GM12878 (cell line): ENCODE measurements at regions of chr14 and their contacts with region 1.

Region 1: GRCh38 chr14:58797010-58797429 is 159.3 kb downstream of the DACT1 start:
- DNase-seq: peak; percentile 88
- ATAC-seq: peak; percentile 86
- H3K4me3 ChIP-seq: no peak overlapping the region
- H3K27ac ChIP-seq: no peak overlapping the region
- H3K4me1 ChIP-seq: peaks cover 7% of the 10 kb centered on the region; the same call in 1 of the 2 replicates
- H3K27me3 ChIP-seq: no peaks in the 10 kb centered on the region
- CTCF ChIP-seq: no peak
- EP300 ChIP-seq: peak; percentile 99 to 100
- POLR2A ChIP-seq: no peak
- RAD21 ChIP-seq: no peak

Region 2: DNA sequence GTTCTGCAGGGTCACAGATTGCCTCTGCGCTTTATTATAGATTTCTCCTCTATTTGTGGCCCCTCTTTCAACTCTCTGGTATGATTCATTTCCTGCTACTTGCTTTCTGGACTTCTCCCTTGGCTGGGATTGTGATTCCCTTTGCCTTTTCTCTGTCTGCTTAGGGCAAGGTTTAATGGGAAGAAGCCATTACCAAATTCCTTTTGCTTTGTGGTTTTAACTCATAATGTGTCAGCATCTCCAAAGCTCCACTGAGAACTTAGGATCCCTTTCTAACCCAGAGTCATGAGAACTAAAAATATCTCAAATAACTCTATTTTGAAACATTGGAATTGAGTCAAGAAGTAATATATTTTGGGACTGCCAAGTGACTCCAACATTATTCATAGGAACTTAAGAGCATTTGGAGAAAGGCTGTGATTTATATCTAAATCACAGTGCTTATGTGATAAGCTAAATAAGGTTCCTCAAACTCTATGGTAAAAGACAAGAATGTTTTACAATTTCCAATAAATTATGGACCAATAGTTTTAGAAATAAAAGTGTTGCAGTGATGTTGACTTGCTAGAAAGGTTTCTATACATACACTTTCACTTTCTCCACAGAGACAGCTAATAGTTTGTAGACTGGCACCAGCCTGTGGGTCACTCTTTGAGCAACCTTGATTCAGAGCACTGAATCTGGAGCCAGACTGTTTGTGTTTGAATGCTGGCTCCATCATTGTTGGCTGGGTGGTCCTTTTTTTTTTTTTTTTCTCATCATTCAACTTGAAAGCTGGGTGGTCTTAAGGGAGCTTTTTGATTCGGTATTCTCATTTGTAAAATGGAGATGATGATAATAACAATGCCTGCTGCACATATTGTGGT is 65.3 kb before region 1 on chr14:
- CTCF ChIA-PET with region 1: interaction called, 21 read pairs
- POLR2A ChIA-PET with region 1: interaction called, 5 read pairs
- RAD21 ChIA-PET with region 1: interaction called, 48 read pairs
- SMC1A ChIA-PET with region 1: interaction called, 35 read pairs
- in situ Hi-C with region 1: no loop called
- intact Hi-C with region 1: loop called (anchors 2 kb)
- DNase-seq: no peak
- ATAC-seq: no peak
- H3K4me3 ChIP-seq: no peak overlapping the region
- H3K27ac ChIP-seq: no peak overlapping the region
- H3K4me1 ChIP-seq: no peaks in the 10 kb centered on the region
- H3K27me3 ChIP-seq: no peaks in the 10 kb centered on the region
- CTCF ChIP-seq: no peak
- EP300 ChIP-seq: no peak
- POLR2A ChIP-seq: no peak
- RAD21 ChIP-seq: no peak

Region 3: GRCh38 chr14:58777541-58777979 is 19.5 kb before region 1 on chr14:
- CTCF ChIA-PET with region 1: interaction called, 7 read pairs
- POLR2A ChIA-PET with region 1: no interaction called
- RAD21 ChIA-PET with region 1: interaction called, 10 read pairs
- SMC1A ChIA-PET with region 1: interaction called, 27 read pairs
- in situ Hi-C with region 1: no loop called
- intact Hi-C with region 1: no loop called
- DNase-seq: no peak
- ATAC-seq: peak; percentile 76
- H3K4me3 ChIP-seq: no peak overlapping the region
- H3K27ac ChIP-seq: no peak overlapping the region
- H3K4me1 ChIP-seq: no peaks in the 10 kb centered on the region
- H3K27me3 ChIP-seq: no peaks in the 10 kb centered on the region
- CTCF ChIP-seq: no peak
- EP300 ChIP-seq: no peak
- POLR2A ChIP-seq: no peak
- RAD21 ChIP-seq: no peak

Region 4: DNA sequence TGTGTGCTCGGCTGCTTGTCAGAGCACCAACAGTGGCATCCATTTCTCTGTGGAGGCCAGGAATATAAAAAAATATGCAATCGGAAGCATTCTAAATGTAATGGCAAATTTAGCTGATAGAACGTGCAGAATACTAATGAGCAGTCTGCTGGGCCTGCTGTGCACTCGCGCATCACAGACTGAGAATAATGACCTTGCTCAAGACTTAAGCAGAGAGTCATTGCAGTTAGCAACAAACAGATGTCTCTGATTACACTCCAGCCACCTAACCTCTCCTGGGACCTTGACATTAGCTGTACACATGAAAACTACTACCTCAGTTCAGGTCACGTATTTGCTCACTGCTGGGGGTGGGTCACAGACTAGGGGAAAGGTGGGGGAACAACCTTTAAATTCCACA is 122.2 kb after region 1 on chr14:
- CTCF ChIA-PET with region 1: no interaction called
- POLR2A ChIA-PET with region 1: interaction called, 3 read pairs
- RAD21 ChIA-PET with region 1: interaction called, 16 read pairs
- SMC1A ChIA-PET with region 1: interaction called, 38 read pairs
- in situ Hi-C with region 1: no loop called
- intact Hi-C with region 1: no loop called
- DNase-seq: peak; percentile 26
- ATAC-seq: peak; percentile 69
- H3K4me3 ChIP-seq: no peak overlapping the region
- H3K27ac ChIP-seq: no peak overlapping the region
- H3K4me1 ChIP-seq: no peaks in the 10 kb centered on the region
- H3K27me3 ChIP-seq: no peaks in the 10 kb centered on the region
- CTCF ChIP-seq: no peak
- EP300 ChIP-seq: no peak
- POLR2A ChIP-seq: no peak
- RAD21 ChIP-seq: no peak

Region 5: GRCh38 chr14:59004012-59004411 is 207.0 kb after region 1 on chr14:
- CTCF ChIA-PET with region 1: interaction called, 4 read pairs
- POLR2A ChIA-PET with region 1: no interaction called
- RAD21 ChIA-PET with region 1: interaction called, 5 read pairs
- SMC1A ChIA-PET with region 1: interaction called, 11 read pairs
- in situ Hi-C with region 1: no loop called
- intact Hi-C with region 1: no loop called
- DNase-seq: no peak
- ATAC-seq: no peak
- H3K4me3 ChIP-seq: no peak overlapping the region
- H3K27ac ChIP-seq: no peak overlapping the region
- H3K4me1 ChIP-seq: no peaks in the 10 kb centered on the region
- H3K27me3 ChIP-seq: no peaks in the 10 kb centered on the region
- CTCF ChIP-seq: no peak
- EP300 ChIP-seq: no peak
- POLR2A ChIP-seq: no peak
- RAD21 ChIP-seq: peak; percentile 39; the same call in 1 of the 2 replicates

Region 6: DNA sequence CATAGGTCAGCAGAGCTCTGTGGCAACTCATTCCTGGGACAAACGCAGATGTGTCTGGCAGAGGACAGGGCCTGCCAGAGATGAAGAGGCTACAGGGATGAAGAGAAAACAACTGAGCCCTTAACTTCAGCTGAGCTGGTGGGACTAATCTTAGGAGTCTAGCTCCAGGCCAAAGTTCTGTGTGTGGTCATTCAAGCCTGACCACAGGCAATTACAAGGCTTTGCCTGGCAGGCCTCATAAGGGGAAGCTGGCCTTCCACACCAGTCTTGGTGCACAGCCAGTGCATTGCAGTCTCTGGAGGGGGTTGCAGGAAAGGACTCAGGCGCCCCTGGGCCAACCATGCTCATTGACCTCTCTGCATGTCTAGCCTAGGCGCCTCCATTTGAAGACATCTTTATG is 263.8 kb after region 1 on chr14:
- CTCF ChIA-PET with region 1: interaction called, 17 read pairs
- POLR2A ChIA-PET with region 1: interaction called, 10 read pairs
- RAD21 ChIA-PET with region 1: interaction called, 21 read pairs
- SMC1A ChIA-PET with region 1: interaction called, 13 read pairs
- in situ Hi-C with region 1: no loop called
- intact Hi-C with region 1: no loop called
- DNase-seq: no peak
- ATAC-seq: peak; percentile 93
- H3K4me3 ChIP-seq: no peak overlapping the region
- H3K27ac ChIP-seq: no peak overlapping the region
- H3K4me1 ChIP-seq: no peaks in the 10 kb centered on the region
- H3K27me3 ChIP-seq: no peaks in the 10 kb centered on the region
- CTCF ChIP-seq: no peak
- EP300 ChIP-seq: no peak
- POLR2A ChIP-seq: no peak
- RAD21 ChIP-seq: no peak

Region 7: GRCh38 chr14:59301354-59301753 is 504.3 kb after region 1 on chr14:
- CTCF ChIA-PET with region 1: no interaction called
- POLR2A ChIA-PET with region 1: no interaction called
- RAD21 ChIA-PET with region 1: no interaction called
- SMC1A ChIA-PET with region 1: no interaction called
- in situ Hi-C with region 1: no loop called
- intact Hi-C with region 1: no loop called
- DNase-seq: peak; percentile 53
- ATAC-seq: peak; percentile 79
- H3K4me3 ChIP-seq: no peak overlapping the region
- H3K27ac ChIP-seq: no peak overlapping the region
- H3K4me1 ChIP-seq: peaks cover 6% of the 10 kb centered on the region; the same call in 1 of the 2 replicates
- H3K27me3 ChIP-seq: no peaks in the 10 kb centered on the region
- CTCF ChIP-seq: no peak
- EP300 ChIP-seq: no peak
- POLR2A ChIP-seq: no peak
- RAD21 ChIP-seq: no peak